ENCODE measurements at regions of chrX and their contacts with region 1.

Region 1: GRCh38 chrX:95076449-95076848 is 1402.4 kb downstream of the FAM133A start:
- DNase-seq: no peak
- ATAC-seq: peak; percentile 59; the same call in 2 of the 3 replicates
- H3K4me3 ChIP-seq: no peak overlapping the region
- H3K27ac ChIP-seq: no peak overlapping the region
- H3K4me1 ChIP-seq: no peaks in the 10 kb centered on the region
- H3K27me3 ChIP-seq: no peaks in the 10 kb centered on the region
- CTCF ChIP-seq: peak; percentile 53 to 56 (median 54)
- EP300 ChIP-seq: no peak
- POLR2A ChIP-seq: no peak
- RAD21 ChIP-seq: peak; percentile 55

Region 2: GRCh38 chrX:93874554-93874953 is 1201.9 kb before region 1 on chrX:
- CTCF ChIA-PET with region 1: no interaction called
- POLR2A ChIA-PET with region 1: no interaction called
- RAD21 ChIA-PET with region 1: interaction called, 3 read pairs
- SMC1A ChIA-PET with region 1: no interaction called
- in situ Hi-C with region 1: loop called (anchors 10 kb)
- intact Hi-C with region 1: loop called (anchors 10 kb)
- DNase-seq: no peak
- ATAC-seq: peak; percentile 47; the same call in 1 of the 3 replicates
- H3K4me3 ChIP-seq: no peak overlapping the region
- H3K27ac ChIP-seq: no peak overlapping the region
- H3K4me1 ChIP-seq: no peaks in the 10 kb centered on the region
- H3K27me3 ChIP-seq: no peaks in the 10 kb centered on the region
- CTCF ChIP-seq: peak; percentile 36 to 58 (median 53); a peak in 5 of 6 replicates
- EP300 ChIP-seq: no peak
- POLR2A ChIP-seq: no peak
- RAD21 ChIP-seq: peak; percentile 58

Region 3: GRCh38 chrX:94751611-94752010 is 324.8 kb before region 1 on chrX:
- CTCF ChIA-PET with region 1: interaction called, 13 read pairs
- POLR2A ChIA-PET with region 1: no interaction called
- RAD21 ChIA-PET with region 1: interaction called, 5 read pairs
- SMC1A ChIA-PET with region 1: interaction called, 16 read pairs
- in situ Hi-C with region 1: no loop called
- intact Hi-C with region 1: loop called (anchors 5 kb)
- DNase-seq: no peak
- ATAC-seq: no peak
- H3K4me3 ChIP-seq: no peak overlapping the region
- H3K27ac ChIP-seq: no peak overlapping the region
- H3K4me1 ChIP-seq: no peaks in the 10 kb centered on the region
- H3K27me3 ChIP-seq: no peaks in the 10 kb centered on the region
- CTCF ChIP-seq: peak in 1 of 3 experiments; percentile 8; a peak in 1 of 6 replicates
- EP300 ChIP-seq: no peak
- POLR2A ChIP-seq: no peak
- RAD21 ChIP-seq: peak; percentile 30; the same call in 1 of the 2 replicates

Region 4: DNA sequence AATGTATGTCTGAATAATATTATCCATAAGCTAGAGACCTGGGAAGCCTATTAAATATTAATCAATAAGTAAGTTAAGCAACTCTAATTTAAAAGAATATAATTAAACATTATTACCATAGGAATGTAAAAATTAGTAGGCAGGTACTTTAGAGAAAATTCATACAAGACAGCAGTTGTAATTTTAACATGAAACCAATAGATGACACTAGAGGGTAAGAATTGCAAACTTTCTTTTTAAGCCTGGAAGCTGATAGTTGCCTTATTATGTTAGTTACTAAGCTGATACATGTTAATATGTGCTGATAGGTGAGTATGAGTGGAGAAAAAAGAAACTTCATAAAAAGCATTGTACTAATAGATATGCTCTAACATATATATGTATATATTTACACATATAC is 245.1 kb before region 1 on chrX:
- CTCF ChIA-PET with region 1: interaction called, 44 read pairs
- POLR2A ChIA-PET with region 1: no interaction called
- RAD21 ChIA-PET with region 1: interaction called, 35 read pairs
- SMC1A ChIA-PET with region 1: interaction called, 29 read pairs
- in situ Hi-C with region 1: loop called (anchors 10 kb)
- intact Hi-C with region 1: loop called (anchors 1 kb)
- DNase-seq: no peak
- ATAC-seq: peak; percentile 54; the same call in 2 of the 3 replicates
- H3K4me3 ChIP-seq: no peak overlapping the region
- H3K27ac ChIP-seq: no peak overlapping the region
- H3K4me1 ChIP-seq: no peaks in the 10 kb centered on the region
- H3K27me3 ChIP-seq: no peaks in the 10 kb centered on the region
- CTCF ChIP-seq: peak in 2 of 3 experiments; percentile 18 to 37; a peak in 3 of 6 replicates
- EP300 ChIP-seq: no peak
- POLR2A ChIP-seq: no peak
- RAD21 ChIP-seq: peak; percentile 62

Region 5: DNA sequence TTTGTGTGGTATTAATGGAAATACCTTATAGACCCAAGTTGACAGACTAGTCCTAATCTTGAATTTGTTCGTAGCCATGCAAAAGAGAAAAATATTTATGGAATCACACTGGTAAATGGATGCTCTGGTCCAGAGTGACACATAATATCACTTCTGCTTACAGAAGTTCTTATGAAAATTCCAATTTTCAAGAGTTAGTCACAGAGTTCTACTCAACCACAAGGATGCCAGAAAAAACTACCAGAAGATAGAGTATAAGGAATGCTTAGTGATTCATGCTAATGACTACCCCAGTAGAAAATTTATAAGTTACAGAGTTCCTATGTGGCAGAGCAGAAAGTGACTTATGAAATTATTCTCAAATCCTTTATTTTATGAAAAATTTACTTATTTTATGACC is 17.6 kb before region 1 on chrX:
- CTCF ChIA-PET with region 1: interaction called, 33 read pairs
- POLR2A ChIA-PET with region 1: interaction called, 7 read pairs
- RAD21 ChIA-PET with region 1: interaction called, 18 read pairs
- SMC1A ChIA-PET with region 1: interaction called, 54 read pairs
- in situ Hi-C with region 1: no loop called
- intact Hi-C with region 1: no loop called
- DNase-seq: no peak
- ATAC-seq: no peak
- H3K4me3 ChIP-seq: no peak overlapping the region
- H3K27ac ChIP-seq: no peak overlapping the region
- H3K4me1 ChIP-seq: no peaks in the 10 kb centered on the region
- H3K27me3 ChIP-seq: no peaks in the 10 kb centered on the region
- CTCF ChIP-seq: no peak
- EP300 ChIP-seq: no peak
- POLR2A ChIP-seq: no peak
- RAD21 ChIP-seq: no peak

Region 6: DNA sequence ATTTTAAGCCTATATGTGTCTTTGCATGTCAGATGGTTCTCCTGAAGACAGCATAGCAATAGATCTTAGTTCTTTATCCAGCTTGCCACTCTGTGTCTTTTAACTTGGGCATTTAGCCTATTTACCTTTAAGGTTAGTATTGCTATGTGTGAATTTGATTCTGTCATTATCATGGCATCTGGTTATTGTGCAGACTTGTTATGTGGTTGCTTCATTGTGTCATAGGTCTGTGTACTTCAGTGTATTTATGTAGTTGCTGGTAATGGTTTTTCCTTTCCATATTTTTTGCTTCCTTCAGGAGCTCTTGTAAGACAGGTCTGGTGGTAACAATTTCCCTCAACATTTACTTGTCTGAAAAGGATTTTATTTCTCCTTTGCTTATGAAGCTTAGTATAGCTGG is 41.1 kb after region 1 on chrX:
- CTCF ChIA-PET with region 1: no interaction called
- POLR2A ChIA-PET with region 1: no interaction called
- RAD21 ChIA-PET with region 1: no interaction called
- SMC1A ChIA-PET with region 1: no interaction called
- in situ Hi-C with region 1: no loop called
- intact Hi-C with region 1: no loop called
- DNase-seq: no peak
- ATAC-seq: no peak
- H3K4me3 ChIP-seq: no peak overlapping the region
- H3K27ac ChIP-seq: no peak overlapping the region
- H3K4me1 ChIP-seq: no peaks in the 10 kb centered on the region
- H3K27me3 ChIP-seq: no peaks in the 10 kb centered on the region
- CTCF ChIP-seq: no peak
- EP300 ChIP-seq: no peak
- POLR2A ChIP-seq: no peak
- RAD21 ChIP-seq: no peak

Region 7: DNA sequence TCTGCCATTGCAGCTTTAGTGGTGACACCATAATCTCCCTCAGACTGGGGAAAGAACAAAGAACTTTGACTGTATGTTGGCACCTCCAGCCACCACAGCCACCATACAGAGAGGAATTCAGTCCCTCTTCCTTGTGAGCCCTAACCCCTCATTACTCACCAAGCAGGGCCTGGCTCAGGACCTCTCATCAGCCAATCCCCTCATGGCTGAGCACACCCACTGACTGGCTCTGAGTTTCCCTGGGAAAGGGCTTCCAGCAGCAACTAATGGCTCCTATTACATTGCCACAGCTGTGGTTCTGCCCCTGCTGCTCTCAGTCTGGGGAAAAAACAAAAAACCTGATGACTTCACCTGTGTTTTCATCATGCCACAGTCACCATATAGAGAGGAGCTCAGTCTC is 80.1 kb after region 1 on chrX:
- CTCF ChIA-PET with region 1: no interaction called
- POLR2A ChIA-PET with region 1: no interaction called
- RAD21 ChIA-PET with region 1: no interaction called
- SMC1A ChIA-PET with region 1: no interaction called
- in situ Hi-C with region 1: no loop called
- intact Hi-C with region 1: no loop called
- DNase-seq: no peak
- ATAC-seq: no peak
- H3K4me3 ChIP-seq: no peak overlapping the region
- H3K27ac ChIP-seq: no peak overlapping the region
- H3K4me1 ChIP-seq: no peaks in the 10 kb centered on the region
- H3K27me3 ChIP-seq: no peaks in the 10 kb centered on the region
- CTCF ChIP-seq: no peak
- EP300 ChIP-seq: no peak
- POLR2A ChIP-seq: no peak
- RAD21 ChIP-seq: no peak

Region 8: DNA sequence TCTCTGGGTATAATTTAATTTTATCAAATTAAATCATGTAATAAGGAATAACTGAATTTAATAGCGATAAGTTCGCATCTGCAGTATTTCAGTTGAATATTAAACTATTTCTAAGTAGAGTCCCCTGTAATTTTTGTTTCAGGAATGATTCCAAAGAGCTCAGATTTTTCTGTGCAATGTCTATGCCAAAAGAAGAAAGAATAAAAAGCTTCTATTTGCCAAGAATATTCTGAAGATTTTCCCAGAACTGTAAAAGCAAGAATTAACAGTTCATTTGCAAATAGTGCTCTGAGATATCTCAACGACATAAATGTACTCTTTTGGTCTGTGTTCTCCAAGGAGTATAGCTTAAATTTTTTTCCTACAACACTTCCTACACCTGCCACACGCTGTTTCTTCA is 365.4 kb after region 1 on chrX:
- CTCF ChIA-PET with region 1: no interaction called
- POLR2A ChIA-PET with region 1: no interaction called
- RAD21 ChIA-PET with region 1: no interaction called
- SMC1A ChIA-PET with region 1: no interaction called
- in situ Hi-C with region 1: no loop called
- intact Hi-C with region 1: no loop called
- DNase-seq: no peak
- ATAC-seq: no peak
- H3K4me3 ChIP-seq: no peak overlapping the region
- H3K27ac ChIP-seq: no peak overlapping the region
- H3K4me1 ChIP-seq: no peaks in the 10 kb centered on the region
- H3K27me3 ChIP-seq: no peaks in the 10 kb centered on the region
- CTCF ChIP-seq: no peak
- EP300 ChIP-seq: no peak
- POLR2A ChIP-seq: no peak
- RAD21 ChIP-seq: no peak